Naive thymus-derived CD4-positive, alpha-beta T cell (primary cell): ENCODE measurements at regions of chr6 and their contacts with region 1.

Region 1: DNA sequence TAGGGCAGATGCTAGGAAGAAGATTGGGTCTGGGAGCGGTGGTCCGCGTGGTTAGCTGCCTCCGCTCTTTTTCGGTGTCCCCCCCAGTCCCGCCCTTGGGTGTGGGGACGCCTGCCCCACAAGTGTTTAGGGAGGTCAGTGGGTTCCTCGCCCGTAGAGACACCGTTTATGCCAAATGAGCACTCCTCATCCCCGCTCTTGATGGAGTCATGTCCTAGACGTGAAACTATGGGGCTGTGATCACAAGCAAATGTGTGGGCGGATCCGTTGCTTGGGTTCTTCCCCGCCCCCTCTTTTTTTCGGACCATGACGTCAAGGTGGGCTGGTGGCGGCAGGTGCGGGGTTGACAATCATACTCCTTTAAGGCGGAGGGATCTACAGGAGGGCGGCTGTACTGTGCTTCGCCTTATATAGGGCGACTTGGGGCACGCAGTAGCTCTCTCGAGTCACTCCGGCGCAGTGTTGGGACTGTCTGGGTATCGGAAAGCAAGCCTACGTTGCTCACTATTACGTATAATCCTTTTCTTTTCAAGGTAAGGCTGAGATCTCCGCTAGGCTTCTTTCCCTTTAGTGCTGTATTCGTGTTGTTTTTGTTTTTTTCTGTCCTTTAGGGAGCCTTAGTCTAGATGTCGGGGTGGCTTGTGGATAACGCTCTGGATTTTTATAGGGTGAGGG is at the start of gene HSP90AB1:
- DNase-seq: peak; percentile 78 to 98 (median 97)
- ATAC-seq: peak; percentile 90
- H3K4me3 ChIP-seq: peak within 1 kb of the TSS; percentile 99
- H3K4me3 Mint-ChIP-seq: peak within 1 kb of the TSS; percentile 94 to 99 (median 98)
- H3K27ac ChIP-seq: peak within 1 kb of the TSS; percentile 93
- H3K27ac Mint-ChIP-seq: peak within 1 kb of the TSS; percentile 96 to 100 (median 98)
- H3K4me1 ChIP-seq: peaks cover 15 to 19% of the 10 kb centered on the region in 2 donors
- H3K4me1 Mint-ChIP-seq: peaks cover 29 to 53% (median 44%) of the 10 kb centered on the region in 7 donors
- H3K27me3 ChIP-seq: no peaks in the 10 kb centered on the region
- H3K27me3 Mint-ChIP-seq: peaks cover 0 to 12% (median 0%) of the 10 kb centered on the region in 5 donors
- total RNA-seq, gene HSP90AB1: 345 to 750 (median 366) TPM

Region 2: GRCh38 chr6:44257025-44257752 is 10.4 kb after region 1 on chr6 and contains the start of gene SLC35B2:
- CTCF ChIA-PET with region 1: interaction called, 22 read pairs
- POLR2A ChIA-PET with region 1: interaction called, 142 read pairs
- intact Hi-C with region 1: loop called (anchors 1 kb)
- DNase-seq: peak; percentile 53 to 83 (median 69)
- ATAC-seq: peak; percentile 87
- H3K4me3 ChIP-seq: peak within 1 kb of the TSS; percentile 74
- H3K4me3 Mint-ChIP-seq: peak within 1 kb of the TSS; percentile 80 to 94 (median 92)
- H3K27ac ChIP-seq: peak within 1 kb of the TSS; percentile 87
- H3K27ac Mint-ChIP-seq: peak within 1 kb of the TSS; percentile 75 to 97 (median 89)
- H3K4me1 ChIP-seq: peaks cover 14 to 18% of the 10 kb centered on the region in 2 donors
- H3K4me1 Mint-ChIP-seq: peaks cover 21 to 64% (median 60%) of the 10 kb centered on the region in 7 donors
- H3K27me3 ChIP-seq: no peaks in the 10 kb centered on the region
- H3K27me3 Mint-ChIP-seq: no peaks in the 10 kb centered on the region
- total RNA-seq, gene SLC35B2: 10.0 to 32.1 (median 17.6) TPM

Region 3: GRCh38 chr6:44312901-44313788 is 66.3 kb after region 1 on chr6 and contains the start of gene AARS2:
- CTCF ChIA-PET with region 1: interaction called, 4 read pairs
- POLR2A ChIA-PET with region 1: interaction called, 8 read pairs
- intact Hi-C with region 1: loop called in 1 of 2 experiments (anchors 1 kb)
- DNase-seq: peak; percentile 79 to 95 (median 88)
- ATAC-seq: peak; percentile 99
- H3K4me3 ChIP-seq: peak within 1 kb of the TSS; percentile 91
- H3K4me3 Mint-ChIP-seq: peak within 1 kb of the TSS; percentile 94 to 100 (median 96)
- H3K27ac ChIP-seq: peak within 1 kb of the TSS; percentile 89
- H3K27ac Mint-ChIP-seq: peak within 1 kb of the TSS; percentile 88 to 98 (median 94)
- H3K4me1 ChIP-seq: peaks cover 7 to 9% of the 10 kb centered on the region in 2 donors
- H3K4me1 Mint-ChIP-seq: peaks cover 16 to 32% (median 25%) of the 10 kb centered on the region in 7 donors
- H3K27me3 ChIP-seq: no peaks in the 10 kb centered on the region
- H3K27me3 Mint-ChIP-seq: peaks cover 0 to 13% (median 3%) of the 10 kb centered on the region in 5 donors
- total RNA-seq, gene AARS2: 13.5 to 29.8 (median 20.9) TPM

Region 4: DNA sequence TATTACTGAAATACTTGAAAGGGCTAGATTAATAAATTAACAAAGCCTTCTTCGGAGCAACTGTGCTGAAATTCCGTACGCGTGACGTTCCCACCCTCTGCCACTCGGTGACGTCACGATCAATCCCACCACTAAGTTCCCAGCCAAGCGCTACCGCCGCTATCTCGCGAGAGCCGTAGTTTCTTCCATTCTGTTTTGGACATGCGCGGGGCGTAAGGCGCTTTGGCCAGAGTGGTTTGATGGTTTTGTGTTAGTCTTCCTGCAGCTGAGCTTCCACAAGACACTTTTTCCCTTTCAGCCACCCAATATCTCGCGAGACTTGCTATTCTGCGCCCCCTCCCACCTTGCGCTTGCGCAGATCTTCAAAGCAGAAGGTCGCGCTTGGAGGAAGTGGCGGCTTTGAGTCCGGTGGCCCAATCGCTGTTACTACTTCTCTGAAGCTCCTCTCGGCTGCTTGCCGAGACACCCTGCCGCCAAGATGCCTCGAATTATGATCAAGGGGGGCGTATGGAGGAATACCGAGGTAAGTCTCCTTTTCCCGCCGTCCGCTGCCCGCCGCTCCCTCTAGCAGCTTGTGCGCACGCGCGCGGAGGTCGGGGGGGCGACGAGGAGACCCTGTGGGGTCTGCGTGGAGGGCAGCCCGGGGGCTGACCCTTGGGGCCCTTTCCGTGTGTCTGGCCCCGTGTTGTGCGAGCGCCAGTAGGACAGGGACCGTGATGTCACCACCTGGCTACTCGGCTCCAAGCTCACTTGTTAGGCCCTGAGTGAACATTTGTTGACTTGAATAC is 140.7 kb after region 1 on chr6 and contains the start of gene CDC5L:
- CTCF ChIA-PET with region 1: no interaction called
- POLR2A ChIA-PET with region 1: no interaction called
- intact Hi-C with region 1: loop called in 1 of 2 experiments (anchors 1 kb)
- DNase-seq: peak; percentile 80 to 96 (median 93)
- ATAC-seq: peak; percentile 88
- H3K4me3 ChIP-seq: peak within 1 kb of the TSS; percentile 71
- H3K4me3 Mint-ChIP-seq: peak within 1 kb of the TSS; percentile 91 to 100 (median 96)
- H3K27ac ChIP-seq: peak within 1 kb of the TSS; percentile 85
- H3K27ac Mint-ChIP-seq: peak within 1 kb of the TSS; percentile 91 to 99 (median 96)
- H3K4me1 ChIP-seq: peaks cover 17 to 29% of the 10 kb centered on the region in 2 donors
- H3K4me1 Mint-ChIP-seq: peaks cover 24 to 49% (median 46%) of the 10 kb centered on the region in 7 donors
- H3K27me3 ChIP-seq: no peaks in the 10 kb centered on the region
- H3K27me3 Mint-ChIP-seq: peaks cover 0 to 28% (median 0%) of the 10 kb centered on the region in 5 donors
- total RNA-seq, gene CDC5L: 17.4 to 25.4 (median 22.4) TPM